IMR-90 (cell line): ENCODE measurements at regions of chr2 and their contacts with region 1.

Region 1: DNA sequence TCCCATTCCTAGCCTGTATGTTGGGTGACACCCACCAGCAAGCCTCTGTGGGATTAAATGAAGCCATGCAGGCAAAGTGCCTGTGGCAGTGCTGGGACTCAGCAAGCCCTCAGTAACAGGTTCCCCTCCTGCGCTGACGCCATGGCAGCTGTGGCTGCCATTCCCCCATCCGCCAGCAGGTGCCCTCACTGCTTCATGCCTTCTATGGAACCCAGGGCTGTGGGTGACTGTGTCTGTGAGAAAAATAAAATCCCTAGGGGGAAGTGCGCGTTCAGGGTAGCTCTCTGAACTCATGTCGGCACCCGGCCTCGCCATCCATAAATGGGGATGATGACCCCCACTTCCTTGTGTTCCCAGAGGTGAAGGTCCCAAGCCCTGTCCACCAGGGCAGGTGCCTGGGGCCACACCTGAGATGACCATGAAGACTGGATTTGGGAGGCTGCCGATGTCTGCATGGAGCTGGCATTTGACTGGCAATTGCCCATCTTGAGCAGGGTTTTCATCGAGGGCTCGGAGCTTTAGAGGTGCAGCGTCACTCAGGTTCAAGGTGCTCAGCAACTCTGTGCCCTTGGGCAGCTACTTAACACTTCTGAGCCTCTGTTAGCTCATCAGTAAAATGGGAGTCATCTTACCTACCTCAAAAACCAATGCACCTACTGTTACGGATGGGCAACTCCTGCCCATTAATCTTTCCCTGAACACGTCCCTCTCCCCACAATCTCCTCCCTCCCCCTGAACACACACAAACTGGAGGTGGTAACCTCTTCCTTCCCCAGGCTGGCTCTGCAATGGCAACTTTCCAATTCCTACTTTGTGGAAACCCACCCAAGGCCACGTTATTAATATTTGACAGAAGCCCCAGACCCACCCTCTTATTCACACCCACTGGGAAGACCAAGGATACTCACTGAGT is 2.9 kb upstream of the MAL start:
- DNase-seq: peak; percentile 54
- ATAC-seq: peak; percentile 99
- H3K4me3 ChIP-seq: no peak overlapping the region
- H3K27ac ChIP-seq: no peak overlapping the region
- H3K4me1 ChIP-seq: peaks cover 4% of the 10 kb centered on the region; the same call in 1 of the 2 replicates
- H3K27me3 ChIP-seq: peaks cover 79% of the 10 kb centered on the region
- CTCF ChIP-seq: peak; percentile 90
- POLR2A ChIP-seq: no peak
- RAD21 ChIP-seq: peak; percentile 76

Region 2: GRCh38 chr2:94874277-94875008 is 148.1 kb before region 1 on chr2:
- CTCF ChIA-PET with region 1: no interaction called
- POLR2A ChIA-PET with region 1: no interaction called
- dilution Hi-C with region 1: no loop called
- in situ Hi-C with region 1: no loop called
- intact Hi-C with region 1: no loop called
- DNase-seq: peak; percentile 6
- ATAC-seq: peak; percentile 88
- H3K4me3 ChIP-seq: no peak overlapping the region
- H3K27ac ChIP-seq: no peak overlapping the region
- H3K4me1 ChIP-seq: no peaks in the 10 kb centered on the region
- H3K27me3 ChIP-seq: peaks cover 2% of the 10 kb centered on the region; the same call in 1 of the 2 replicates
- CTCF ChIP-seq: peak; percentile 98
- POLR2A ChIP-seq: no peak
- RAD21 ChIP-seq: peak; percentile 46

Region 3: DNA sequence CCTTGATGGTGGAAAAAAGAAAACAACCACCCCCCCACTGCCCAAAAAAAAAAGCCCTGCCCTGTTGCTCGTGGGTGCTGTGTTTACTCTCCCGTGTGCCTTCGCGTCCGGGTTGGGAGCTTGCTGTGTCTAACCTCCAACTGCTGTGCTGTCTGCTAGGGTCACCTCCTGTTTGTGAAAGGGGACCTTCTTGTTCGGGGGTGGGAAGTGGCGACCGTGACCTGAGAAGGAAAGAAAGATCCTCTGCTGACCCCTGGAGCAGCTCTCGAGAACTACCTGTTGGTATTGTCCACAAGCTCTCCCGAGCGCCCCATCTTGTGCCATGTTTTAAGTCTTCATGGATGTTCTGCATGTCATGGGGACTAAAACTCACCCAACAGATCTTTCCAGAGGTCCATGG is 31.0 kb after region 1 on chr2:
- CTCF ChIA-PET with region 1: no interaction called
- POLR2A ChIA-PET with region 1: no interaction called
- dilution Hi-C with region 1: no loop called
- in situ Hi-C with region 1: no loop called
- intact Hi-C with region 1: loop called (anchors 1 kb)
- DNase-seq: no peak
- ATAC-seq: no peak
- H3K4me3 ChIP-seq: no peak overlapping the region
- H3K27ac ChIP-seq: no peak overlapping the region
- H3K4me1 ChIP-seq: peaks cover 7% of the 10 kb centered on the region; the same call in 1 of the 2 replicates
- H3K27me3 ChIP-seq: peaks cover 35% of the 10 kb centered on the region; the same call in 1 of the 2 replicates
- CTCF ChIP-seq: no peak
- POLR2A ChIP-seq: no peak
- RAD21 ChIP-seq: no peak

Region 4: GRCh38 chr2:95076784-95077529 is 54.4 kb after region 1 on chr2:
- CTCF ChIA-PET with region 1: interaction called, 9 read pairs
- POLR2A ChIA-PET with region 1: no interaction called
- dilution Hi-C with region 1: no loop called
- in situ Hi-C with region 1: loop called (anchors 5 kb)
- intact Hi-C with region 1: loop called (anchors 1 kb)
- DNase-seq: peak; percentile 39
- ATAC-seq: peak; percentile 88
- H3K4me3 ChIP-seq: peak overlapping the region; percentile 36
- H3K27ac ChIP-seq: no peak overlapping the region
- H3K4me1 ChIP-seq: no peaks in the 10 kb centered on the region
- H3K27me3 ChIP-seq: peaks cover 44% of the 10 kb centered on the region
- CTCF ChIP-seq: peak; percentile 65
- POLR2A ChIP-seq: no peak
- RAD21 ChIP-seq: peak; percentile 40

Region 5: DNA sequence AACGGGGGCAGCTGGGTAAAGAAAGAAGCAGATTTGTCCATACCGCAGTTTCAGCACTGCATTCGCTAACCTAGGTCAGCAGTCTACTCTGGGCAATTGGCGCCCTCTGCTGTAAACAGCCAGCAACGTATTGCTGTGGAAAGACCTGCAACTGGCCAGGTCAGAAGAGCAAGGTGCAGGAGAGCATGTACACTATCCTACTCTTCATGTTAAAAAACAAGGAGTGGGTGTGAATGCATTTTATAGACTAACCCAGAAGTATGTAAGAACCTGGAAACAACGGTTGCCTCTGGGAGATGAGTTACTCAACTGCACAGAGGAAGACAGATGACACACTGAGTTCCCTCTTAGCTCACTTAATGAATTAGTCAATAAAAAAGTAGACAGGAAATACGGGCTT is 92.9 kb after region 1 on chr2:
- CTCF ChIA-PET with region 1: interaction called, 6 read pairs
- POLR2A ChIA-PET with region 1: no interaction called
- dilution Hi-C with region 1: no loop called
- in situ Hi-C with region 1: no loop called
- intact Hi-C with region 1: loop called (anchors 1 kb)
- DNase-seq: peak; percentile 61
- ATAC-seq: peak; percentile 98
- H3K4me3 ChIP-seq: no peak overlapping the region
- H3K27ac ChIP-seq: no peak overlapping the region
- H3K4me1 ChIP-seq: no peaks in the 10 kb centered on the region
- H3K27me3 ChIP-seq: no peaks in the 10 kb centered on the region
- CTCF ChIP-seq: peak; percentile 76
- POLR2A ChIP-seq: no peak
- RAD21 ChIP-seq: peak; percentile 62

Region 6: DNA sequence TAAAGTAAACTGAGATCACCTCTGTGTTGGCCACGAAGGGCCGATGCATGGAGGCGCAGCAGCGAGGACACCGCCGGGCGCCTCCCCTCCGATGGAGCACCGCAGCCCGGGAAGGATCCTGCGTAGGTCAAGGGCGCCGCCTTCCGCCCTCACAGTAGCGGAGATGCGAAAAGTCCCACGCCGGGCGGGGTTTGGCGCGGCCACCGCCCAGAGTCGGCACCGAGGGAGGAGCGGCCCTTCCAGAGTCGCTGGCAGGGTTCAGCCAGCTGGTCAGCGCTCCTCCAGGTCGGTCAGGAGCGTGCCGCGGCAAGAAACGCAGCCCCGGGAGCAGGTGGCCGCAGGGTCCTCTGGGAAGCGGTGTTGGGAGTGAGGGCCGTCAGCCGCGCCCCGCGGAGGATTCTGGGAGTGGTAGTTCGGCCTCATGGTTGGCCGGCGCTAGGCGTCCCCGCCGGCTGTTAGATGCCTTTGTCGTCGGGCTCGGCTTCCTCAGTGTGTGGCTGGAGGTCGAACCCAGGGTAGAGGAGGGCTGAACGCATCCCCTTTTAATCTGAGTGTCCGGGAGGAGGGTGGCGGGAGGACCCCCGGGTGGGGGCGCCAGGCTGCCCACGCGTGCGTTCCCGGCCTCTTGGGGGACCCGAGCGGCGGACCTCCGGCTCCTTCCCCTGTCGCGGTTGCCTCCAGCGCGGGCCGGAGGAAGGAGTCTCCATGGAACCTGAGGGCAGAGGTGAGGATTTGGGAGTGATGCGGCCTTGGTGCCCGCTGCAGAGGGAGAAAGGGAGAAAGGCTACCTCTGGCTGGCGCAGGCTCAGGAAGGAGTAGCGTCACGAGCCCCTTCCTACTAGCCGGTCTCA is 184.8 kb after region 1 on chr2 and contains the start of gene ZNF892:
- CTCF ChIA-PET with region 1: no interaction called
- POLR2A ChIA-PET with region 1: no interaction called
- dilution Hi-C with region 1: no loop called
- in situ Hi-C with region 1: no loop called
- intact Hi-C with region 1: loop called (anchors 1 kb)
- DNase-seq: peak; percentile 82
- ATAC-seq: peak; percentile 98
- H3K4me3 ChIP-seq: peak within 1 kb of the TSS; percentile 91
- H3K27ac ChIP-seq: peak within 1 kb of the TSS; percentile 53
- H3K4me1 ChIP-seq: no peaks in the 10 kb centered on the region
- H3K27me3 ChIP-seq: no peaks in the 10 kb centered on the region
- CTCF ChIP-seq: peak; percentile 43
- POLR2A ChIP-seq: peak; percentile 26; the same call in 1 of the 2 replicates
- RAD21 ChIP-seq: peak; percentile 52
- total RNA-seq, gene ZNF892: 2.2 and 2.7 TPM in 2 replicates